Right ventricle myocardium inferior (tissue), 1 donor: ENCODE measurements at regions of chr6 and their contacts with region 1.

Region 1: GRCh38 chr6:163355426-163355991 is 59.0 kb upstream of the QKI start:
- DNase-seq: peak; percentile 90
- ATAC-seq: peak; percentile 71

Region 2: DNA sequence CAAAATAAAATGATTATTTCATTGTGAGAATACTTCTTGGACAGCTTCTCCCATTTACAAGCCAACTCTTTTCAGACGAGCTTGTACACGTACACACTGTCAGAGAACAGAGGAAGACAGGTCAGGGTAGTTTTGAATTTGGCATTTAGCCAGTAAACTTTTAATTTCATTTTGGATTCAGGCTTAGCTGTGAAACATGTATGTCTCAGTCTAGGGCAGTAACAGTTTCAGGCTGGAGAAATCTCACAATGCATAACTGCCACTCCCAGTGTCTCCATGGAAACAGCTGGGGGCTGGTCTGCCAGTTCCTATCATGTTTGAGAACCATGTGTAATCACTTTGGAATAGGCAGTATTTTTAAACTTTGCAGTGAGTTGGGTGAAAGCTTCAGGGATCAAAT is 37.0 kb after region 1 on chr6:
- intact Hi-C with region 1: loop called (anchors 5 kb)
- DNase-seq: no peak
- ATAC-seq: peak; percentile 36

Region 3: GRCh38 chr6:163533443-163533842 is 177.9 kb after region 1 on chr6:
- intact Hi-C with region 1: no loop called
- DNase-seq: no peak
- ATAC-seq: peak; percentile 38